ACHN (cell line): ENCODE measurements at regions of chr7 and their contacts with region 1.

Region 1: DNA sequence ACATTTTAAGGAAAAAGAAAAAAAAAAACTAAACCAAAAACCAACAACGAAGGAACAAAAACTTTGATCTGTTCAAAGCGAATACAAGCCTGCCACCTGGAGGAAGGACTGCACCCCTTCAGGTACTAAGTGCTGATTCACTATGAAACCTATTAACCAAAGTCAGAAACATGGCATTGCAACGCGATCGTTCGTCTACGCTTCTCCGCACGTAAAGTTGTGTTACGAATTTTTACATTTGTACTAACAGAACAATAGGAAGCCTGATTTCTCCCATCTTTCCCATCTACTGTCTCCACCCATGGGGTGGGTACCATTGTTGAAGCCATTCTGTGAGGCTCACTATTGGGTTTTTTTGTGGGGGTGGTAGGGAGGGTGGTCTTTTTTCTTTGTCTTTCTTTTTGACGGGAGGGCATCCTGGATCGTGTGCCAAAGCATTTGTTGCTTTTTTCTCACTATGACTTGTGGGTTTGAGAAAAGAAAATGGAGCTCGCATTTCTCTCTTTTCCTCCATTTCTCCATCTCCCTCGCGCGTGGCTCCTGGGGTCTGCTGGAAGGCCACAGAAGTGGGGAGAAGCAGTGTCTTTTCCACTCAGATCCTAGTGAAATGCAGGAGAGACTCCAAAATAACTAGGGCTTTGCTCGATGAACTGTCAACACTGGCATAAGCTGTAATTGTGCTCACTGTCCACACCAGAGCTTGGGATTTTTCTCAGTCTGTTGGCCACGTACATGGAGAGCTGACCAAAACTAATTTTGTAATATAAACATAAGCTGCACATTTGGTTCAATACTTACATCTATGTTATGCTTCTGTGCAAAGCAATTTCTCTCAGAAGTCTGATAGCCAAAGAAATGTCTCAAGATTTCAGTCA is 100.9 kb upstream of the YAE1 start:
- DNase-seq: peak; percentile 85

Region 2: DNA sequence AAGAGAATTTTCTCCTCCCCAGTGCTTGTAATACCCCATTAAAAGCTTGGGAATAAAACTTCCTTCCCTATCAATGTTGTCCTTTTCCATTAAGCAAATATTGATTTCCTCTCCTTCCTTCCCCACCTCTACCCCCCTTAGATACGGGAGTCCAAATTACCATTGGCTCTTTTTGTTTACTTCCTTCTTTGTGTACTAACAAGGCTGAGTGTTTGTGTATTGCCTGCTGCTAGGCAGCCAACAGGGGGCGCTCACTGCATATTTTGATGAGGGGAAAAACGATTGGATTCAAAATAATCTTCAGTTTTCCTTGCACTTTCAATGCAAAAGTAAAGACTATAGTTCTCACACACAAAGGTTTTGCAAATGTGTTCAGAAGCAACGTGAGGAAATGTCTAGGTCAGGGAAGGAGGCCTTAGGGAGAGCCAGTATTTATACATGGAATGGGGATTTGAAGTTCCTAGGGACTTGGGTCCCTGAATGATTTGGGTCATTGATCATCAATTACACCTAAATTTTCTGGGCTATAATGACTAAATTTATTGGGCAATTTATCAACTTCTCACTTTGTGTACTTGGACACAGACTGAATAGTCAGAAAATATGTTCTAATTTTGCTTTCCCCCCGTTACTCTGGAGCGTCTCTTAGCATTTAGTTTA is 532.7 kb before region 1 on chr7:
- in situ Hi-C with region 1: loop called (anchors 25 kb)
- DNase-seq: peak; percentile 71